Heart left ventricle (tissue), 16 donors: ENCODE measurements at regions of chr4 and their contacts with region 1.

Region 1: DNA sequence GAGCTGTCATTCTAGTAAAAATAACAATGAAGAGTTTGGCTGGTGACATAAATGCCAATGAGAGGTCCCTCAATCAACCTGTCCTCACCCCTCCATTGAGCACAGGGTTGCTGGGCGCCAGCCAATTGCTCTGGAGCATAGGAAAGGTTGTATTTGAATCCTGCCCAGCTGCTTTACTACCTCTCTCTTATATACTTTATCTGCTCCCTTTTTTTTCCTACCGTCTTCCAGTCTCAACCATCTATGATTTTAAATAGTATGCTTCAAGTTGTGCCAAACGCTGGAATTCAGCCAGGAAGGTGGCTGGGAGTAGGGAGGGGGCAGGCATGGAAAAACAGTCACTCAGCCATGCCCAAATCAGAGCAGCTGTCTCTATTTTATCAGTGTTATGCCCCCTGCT is 153.8 kb downstream of the NR3C2 start:
- DNase-seq: peak; percentile 33 to 73 (median 66)
- ATAC-seq: peak; percentile 62 to 81 (median 74)
- H3K4me3 ChIP-seq: no peak overlapping the region
- H3K27ac ChIP-seq: peak overlapping the region in 1 of 12 donors; percentile 10
- H3K4me1 ChIP-seq: peaks cover 0 to 62% (median 35%) of the 10 kb centered on the region in 12 donors
- H3K27me3 ChIP-seq: no peaks in the 10 kb centered on the region
- CTCF ChIP-seq: no peak
- POLR2A ChIP-seq: no peak

Region 2: DNA sequence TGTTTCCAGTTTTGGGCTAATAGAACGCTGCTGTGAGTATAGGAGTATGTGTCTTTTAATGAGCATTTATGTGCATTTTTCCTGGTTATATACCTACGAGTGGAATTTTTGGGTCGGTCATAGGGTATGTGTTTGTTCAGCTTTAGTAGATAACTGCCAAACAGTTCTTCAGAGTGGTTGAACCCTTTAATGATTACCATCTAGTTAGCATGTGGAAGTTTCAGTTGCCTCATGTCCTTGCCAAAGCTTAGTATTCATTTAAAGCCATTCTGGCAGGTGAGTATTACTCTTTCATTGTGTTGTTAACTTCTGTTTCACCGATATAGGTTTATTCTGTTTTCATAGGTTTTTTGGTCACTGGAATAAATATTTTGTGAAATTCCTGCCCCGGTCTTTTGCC is 327.5 kb before region 1 on chr4:
- intact Hi-C with region 1: no loop called
- DNase-seq: no peak
- ATAC-seq: no peak
- H3K4me3 ChIP-seq: no peak overlapping the region
- H3K27ac ChIP-seq: no peak overlapping the region
- H3K4me1 ChIP-seq: peaks cover 0 to 32% (median 19%) of the 10 kb centered on the region in 12 donors
- H3K27me3 ChIP-seq: no peaks in the 10 kb centered on the region
- CTCF ChIP-seq: no peak
- POLR2A ChIP-seq: no peak

Region 3: GRCh38 chr4:149264093-149264733 is 975.8 kb after region 1 on chr4:
- intact Hi-C with region 1: loop called in 1 of 10 experiments (anchors 10 kb)
- DNase-seq: peak in 3 of 5 donors; percentile 18 to 25 (median 22)
- ATAC-seq: peak in 2 of 4 donors; percentile 57 to 71
- H3K4me3 ChIP-seq: no peak overlapping the region
- H3K27ac ChIP-seq: no peak overlapping the region
- H3K4me1 ChIP-seq: no peaks in the 10 kb centered on the region
- H3K27me3 ChIP-seq: no peaks in the 10 kb centered on the region
- CTCF ChIP-seq: peak; percentile 48 to 69 (median 60)
- POLR2A ChIP-seq: no peak